ENCODE measurements at regions of chr16 and their contacts with region 1.

Region 1: DNA sequence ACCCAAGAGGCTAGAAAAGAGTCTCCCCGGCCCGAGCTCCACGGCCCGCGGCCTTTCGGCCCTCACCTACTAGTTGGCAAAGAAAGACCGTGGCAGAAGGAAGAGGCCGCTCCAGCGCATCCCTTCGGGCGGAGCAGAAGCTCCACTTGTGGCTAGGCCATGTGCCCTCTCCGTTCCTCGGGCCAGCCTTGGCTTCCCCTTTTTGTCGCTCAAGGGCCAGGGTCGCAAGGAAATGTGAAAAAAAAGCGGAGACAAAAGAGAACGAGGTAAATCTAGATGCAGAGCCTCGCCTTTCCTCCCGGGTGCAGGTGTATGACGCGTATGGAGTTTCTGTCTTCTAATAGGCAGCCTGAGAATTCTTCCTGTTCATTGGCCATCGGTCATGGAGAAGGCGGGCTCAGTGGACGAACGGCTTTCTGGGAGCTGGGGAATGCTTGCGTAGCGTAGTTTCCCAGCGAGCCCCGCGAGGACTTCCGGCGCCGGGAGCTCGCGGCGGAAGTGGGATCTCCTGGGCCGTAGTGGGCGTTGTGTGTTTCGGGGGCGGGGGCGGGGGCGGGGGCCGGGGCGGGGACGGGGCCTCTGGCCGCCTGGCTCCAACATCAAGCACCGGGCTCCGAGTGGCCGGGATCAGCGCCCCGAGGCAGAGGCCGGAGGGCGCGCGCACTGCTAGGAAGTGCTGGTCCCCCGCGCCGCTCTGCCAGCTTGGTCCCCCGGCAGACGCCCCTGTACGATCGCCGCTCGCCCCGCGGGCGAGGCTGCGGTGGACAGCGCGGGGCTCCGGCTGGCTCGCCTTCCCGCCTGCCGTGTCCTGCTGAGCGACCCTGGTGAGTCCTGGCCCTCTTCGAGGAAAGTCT is at the start of gene ZNF213:
- DNase-seq: peak; percentile 87 to 97 (median 94)
- H3K4me3 ChIP-seq: peak within 1 kb of the TSS; percentile 98
- H3K4me3 Mint-ChIP-seq: peak within 1 kb of the TSS; percentile 92 to 99 (median 97)
- H3K27ac ChIP-seq: peak within 1 kb of the TSS; percentile 98
- H3K27ac Mint-ChIP-seq: peak within 1 kb of the TSS; percentile 94 to 99 (median 98)
- H3K4me1 ChIP-seq: peaks cover 22% of the 10 kb centered on the region
- H3K4me1 Mint-ChIP-seq: peaks cover 23 to 36% (median 23%) of the 10 kb centered on the region in 3 donors
- H3K27me3 ChIP-seq: no peaks in the 10 kb centered on the region
- H3K27me3 Mint-ChIP-seq: no peaks in the 10 kb centered on the region
- total RNA-seq, gene ZNF213: 10.4 to 10.5 TPM

Region 2: DNA sequence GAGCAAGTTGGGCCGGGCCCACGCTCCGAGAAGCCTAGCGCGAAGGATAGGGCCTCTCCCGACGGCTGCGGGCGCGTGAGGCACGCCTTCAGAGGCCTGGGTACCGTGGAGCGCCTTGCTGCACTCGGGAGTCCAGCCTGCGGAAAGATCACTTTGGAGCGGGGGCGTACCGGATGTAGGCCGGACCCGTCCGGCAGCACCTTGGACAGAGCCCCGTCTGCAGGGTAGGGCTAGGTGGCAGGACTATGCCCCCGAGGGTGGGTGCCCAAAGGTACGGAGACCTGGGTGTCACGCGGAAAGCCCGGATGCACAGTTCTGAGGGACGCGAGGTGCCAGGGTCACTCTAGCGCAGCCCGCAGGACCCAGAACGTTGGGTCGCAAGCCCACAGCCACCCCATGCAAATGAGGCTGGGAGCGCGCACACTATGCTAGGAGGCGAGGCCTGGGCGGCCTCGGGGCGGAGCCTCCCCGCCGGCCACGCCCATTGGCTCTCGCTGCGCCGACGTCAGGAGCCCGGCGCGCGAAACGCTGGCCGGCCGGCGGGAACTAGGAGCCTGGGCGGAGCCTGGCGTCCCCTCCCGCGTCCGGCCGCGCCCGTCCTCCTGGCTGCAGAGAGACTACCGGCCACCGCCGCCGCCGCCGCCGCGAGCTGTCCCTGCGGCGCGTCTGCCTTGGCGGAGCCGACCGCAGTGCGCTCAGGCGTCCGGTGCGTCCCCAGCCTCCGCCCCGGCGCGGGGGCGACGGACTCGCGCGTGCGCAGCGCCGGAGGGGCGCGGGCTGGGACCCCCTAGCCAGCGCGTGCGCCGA is 165.8 kb before region 1 on chr16 and contains the start of gene PAQR4:
- CTCF ChIA-PET with region 1: no interaction called
- POLR2A ChIA-PET with region 1: no interaction called
- DNase-seq: peak; percentile 69 to 76 (median 71)
- H3K4me3 ChIP-seq: peak within 1 kb of the TSS; percentile 71
- H3K4me3 Mint-ChIP-seq: peak within 1 kb of the TSS; percentile 67 to 88 (median 73)
- H3K27ac ChIP-seq: peak within 1 kb of the TSS; percentile 39
- H3K27ac Mint-ChIP-seq: peak within 1 kb of the TSS in 2 of 8 donors; percentile 48 to 56
- H3K4me1 ChIP-seq: peaks cover 36% of the 10 kb centered on the region
- H3K4me1 Mint-ChIP-seq: peaks cover 12 to 44% (median 15%) of the 10 kb centered on the region in 3 donors
- H3K27me3 ChIP-seq: peaks cover 35% of the 10 kb centered on the region
- H3K27me3 Mint-ChIP-seq: peaks cover 14 to 29% of the 10 kb centered on the region in 2 donors
- total RNA-seq, gene PAQR4: 38.7 to 39.0 TPM

Region 3: GRCh38 chr16:3106205-3106928 is 28.4 kb before region 1 on chr16:
- CTCF ChIA-PET with region 1: interaction called, 278 read pairs
- POLR2A ChIA-PET with region 1: interaction called, 10 read pairs
- DNase-seq: peak; percentile 83 to 95 (median 88)
- H3K4me3 ChIP-seq: peak overlapping the region; percentile 75
- H3K4me3 Mint-ChIP-seq: peak overlapping the region; percentile 86 to 93 (median 88)
- H3K27ac ChIP-seq: peak overlapping the region; percentile 72
- H3K27ac Mint-ChIP-seq: peak overlapping the region; percentile 73 to 95 (median 91)
- H3K4me1 ChIP-seq: peaks cover 21% of the 10 kb centered on the region
- H3K4me1 Mint-ChIP-seq: peaks cover 23 to 29% (median 24%) of the 10 kb centered on the region in 3 donors
- H3K27me3 ChIP-seq: no peaks in the 10 kb centered on the region
- H3K27me3 Mint-ChIP-seq: no peaks in the 10 kb centered on the region

Region 4: GRCh38 chr16:3150346-3151218 is 15.8 kb after region 1 on chr16:
- CTCF ChIA-PET with region 1: interaction called, 123 read pairs
- POLR2A ChIA-PET with region 1: interaction called, 30 read pairs
- DNase-seq: peak; percentile 92 to 98 (median 96)
- H3K4me3 ChIP-seq: peak overlapping the region; percentile 97
- H3K4me3 Mint-ChIP-seq: peak overlapping the region; percentile 87 to 94 (median 90)
- H3K27ac ChIP-seq: peak overlapping the region; percentile 70
- H3K27ac Mint-ChIP-seq: peak overlapping the region; percentile 66 to 99 (median 92)
- H3K4me1 ChIP-seq: peaks cover 24% of the 10 kb centered on the region
- H3K4me1 Mint-ChIP-seq: peaks cover 21 to 40% (median 30%) of the 10 kb centered on the region in 3 donors
- H3K27me3 ChIP-seq: no peaks in the 10 kb centered on the region
- H3K27me3 Mint-ChIP-seq: peaks cover 0 to 18% of the 10 kb centered on the region in 2 donors

Region 5: DNA sequence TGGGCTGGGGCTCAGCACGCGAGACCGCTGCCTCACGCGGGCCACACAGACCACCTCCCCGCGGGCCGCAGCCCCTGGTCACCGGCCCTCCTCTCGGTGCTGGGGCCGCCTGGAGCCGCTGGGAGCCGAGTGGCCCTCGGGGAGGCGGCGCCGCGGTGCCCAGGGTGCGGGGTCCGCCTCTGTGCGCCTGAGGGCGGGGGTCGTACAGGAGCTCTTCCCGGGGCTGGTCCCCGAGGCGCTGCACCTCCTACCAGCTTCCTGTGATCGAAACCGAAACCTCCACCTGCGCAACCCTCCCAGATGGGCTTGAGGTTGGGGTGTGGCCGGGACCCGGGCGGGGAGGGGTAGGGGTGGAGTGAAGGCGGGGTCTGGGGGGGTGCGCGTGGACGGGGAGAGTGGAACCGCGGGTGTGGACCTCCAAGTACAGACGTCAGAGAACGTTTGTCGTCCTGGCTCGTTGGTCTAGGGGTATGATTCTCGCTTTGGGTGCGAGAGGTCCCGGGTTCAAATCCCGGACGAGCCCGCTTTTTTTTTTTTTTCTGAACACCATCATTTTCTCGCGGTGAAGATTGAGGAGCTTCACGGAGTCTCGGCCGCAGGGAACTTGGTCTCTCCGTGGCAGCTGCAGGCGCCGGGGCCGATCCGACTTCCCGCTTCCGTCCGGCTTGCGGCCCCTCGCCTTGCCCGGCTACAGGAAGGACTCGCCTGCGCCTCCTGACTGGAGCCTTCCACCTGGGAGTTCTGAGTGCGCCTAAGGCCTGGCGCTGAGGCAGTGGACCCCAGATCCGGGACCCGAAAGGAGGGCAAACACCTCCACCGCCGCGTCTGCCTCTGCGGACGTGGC is 23.9 kb after region 1 on chr16:
- CTCF ChIA-PET with region 1: interaction called, 44 read pairs
- POLR2A ChIA-PET with region 1: interaction called, 29 read pairs
- DNase-seq: peak; percentile 92 to 97 (median 93)
- H3K4me3 ChIP-seq: peak overlapping the region; percentile 87
- H3K4me3 Mint-ChIP-seq: peak overlapping the region; percentile 86 to 96 (median 91)
- H3K27ac ChIP-seq: peak overlapping the region; percentile 82
- H3K27ac Mint-ChIP-seq: peak overlapping the region; percentile 89 to 99 (median 96)
- H3K4me1 ChIP-seq: peaks cover 24% of the 10 kb centered on the region
- H3K4me1 Mint-ChIP-seq: peaks cover 21 to 32% (median 25%) of the 10 kb centered on the region in 3 donors
- H3K27me3 ChIP-seq: no peaks in the 10 kb centered on the region
- H3K27me3 Mint-ChIP-seq: peaks cover 0 to 16% of the 10 kb centered on the region in 2 donors

Region 6: GRCh38 chr16:3165111-3165822 is 30.5 kb after region 1 on chr16:
- CTCF ChIA-PET with region 1: interaction called, 48 read pairs
- POLR2A ChIA-PET with region 1: no interaction called
- DNase-seq: no peak
- H3K4me3 ChIP-seq: peak overlapping the region; percentile 58
- H3K4me3 Mint-ChIP-seq: peak overlapping the region in 6 of 7 donors; percentile 50 to 83 (median 66)
- H3K27ac ChIP-seq: peak overlapping the region; percentile 54
- H3K27ac Mint-ChIP-seq: peak overlapping the region; percentile 39 to 86 (median 82)
- H3K4me1 ChIP-seq: peaks cover 5% of the 10 kb centered on the region
- H3K4me1 Mint-ChIP-seq: peaks cover 10 to 16% (median 13%) of the 10 kb centered on the region in 3 donors
- H3K27me3 ChIP-seq: no peaks in the 10 kb centered on the region
- H3K27me3 Mint-ChIP-seq: peaks cover 0 to 1% of the 10 kb centered on the region in 2 donors

Measured in CD8-positive, alpha-beta memory T cell (primary cell).